A673 (cell line): ENCODE measurements at regions of chr21 and their contacts with region 1.

Region 1: DNA sequence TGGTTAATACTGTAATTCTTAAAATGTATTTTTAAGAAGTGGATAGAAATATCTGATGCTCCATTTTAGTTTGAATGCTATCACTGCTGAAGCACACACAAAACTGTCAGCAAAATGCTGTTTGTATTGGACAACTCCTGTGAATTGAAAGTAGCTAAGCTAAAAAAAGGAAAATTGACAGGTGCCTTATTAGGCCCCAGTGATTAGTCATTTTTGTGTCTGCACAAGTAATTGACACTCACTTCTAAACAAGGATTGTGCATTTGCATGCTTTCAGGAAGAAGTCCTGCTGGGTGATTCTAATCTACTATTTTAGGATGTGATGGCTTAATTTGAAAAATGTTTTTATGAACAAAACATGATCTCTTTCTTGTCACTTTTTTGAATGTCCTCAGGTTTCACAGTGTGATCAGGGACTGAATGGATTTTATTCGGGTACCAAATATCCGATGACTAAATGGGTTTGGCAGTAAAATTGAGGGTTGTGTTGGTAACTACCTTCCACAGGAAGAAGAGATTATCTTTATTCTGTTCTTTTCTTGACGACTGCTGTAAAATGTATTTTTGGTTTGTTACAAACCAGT is 13.0 kb upstream of the MAP3K7CL start:
- DNase-seq: peak; percentile 92
- H3K4me3 ChIP-seq: no peak overlapping the region
- H3K27ac ChIP-seq: no peak overlapping the region
- H3K4me1 ChIP-seq: peaks cover 17% of the 10 kb centered on the region
- H3K27me3 ChIP-seq: no peaks in the 10 kb centered on the region
- CTCF ChIP-seq: no peak

Region 2: DNA sequence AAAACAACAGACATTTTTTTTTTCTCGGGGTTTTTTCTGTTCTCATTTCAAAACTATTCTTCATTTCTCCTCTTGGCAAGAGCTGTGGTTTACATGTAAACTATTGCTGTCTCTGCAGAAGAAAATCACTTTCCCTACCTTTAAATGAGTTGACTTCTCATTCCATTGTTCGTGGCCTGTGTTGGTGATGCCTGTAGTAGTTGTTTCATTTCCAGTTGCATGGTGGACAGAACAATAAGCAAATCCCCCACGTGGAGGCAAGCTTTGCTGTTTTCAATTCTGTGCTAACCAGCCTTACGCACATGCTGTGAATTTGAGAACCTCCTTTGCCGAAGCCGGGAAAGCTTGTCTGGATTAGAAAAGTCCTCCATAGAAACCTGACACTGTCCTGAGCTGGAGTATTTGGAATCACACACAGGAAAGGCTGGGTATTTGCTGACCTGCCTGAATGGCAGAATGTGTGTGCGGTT is 13.2 kb before region 1 on chr21:
- CTCF ChIA-PET with region 1: no interaction called
- POLR2A ChIA-PET with region 1: no interaction called
- intact Hi-C with region 1: no loop called
- DNase-seq: no peak
- H3K4me3 ChIP-seq: no peak overlapping the region
- H3K27ac ChIP-seq: no peak overlapping the region
- H3K4me1 ChIP-seq: peaks cover 4% of the 10 kb centered on the region
- H3K27me3 ChIP-seq: no peaks in the 10 kb centered on the region
- CTCF ChIP-seq: no peak

Region 3: DNA sequence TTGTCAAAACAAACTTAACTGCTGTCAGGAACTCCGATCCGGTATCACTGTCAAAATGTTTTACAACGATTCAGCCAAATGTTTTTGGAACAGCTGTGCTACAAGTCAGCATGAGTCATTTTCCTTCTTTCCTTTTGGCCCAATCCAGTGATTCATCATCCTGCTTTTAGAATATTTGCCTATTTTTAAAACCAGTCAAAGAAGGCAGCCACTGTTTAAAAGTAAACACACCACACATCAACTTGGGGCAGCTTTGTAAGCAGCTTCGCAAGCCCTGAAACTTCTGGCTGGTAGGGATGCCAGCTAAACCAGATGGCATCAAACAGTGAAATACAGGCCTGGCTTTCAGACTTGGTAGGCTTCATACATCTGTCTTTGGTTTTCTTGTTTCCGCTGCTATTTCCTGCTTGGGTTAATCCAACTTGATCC is 27.9 kb after region 1 on chr21:
- CTCF ChIA-PET with region 1: interaction called, 3 read pairs
- POLR2A ChIA-PET with region 1: no interaction called
- intact Hi-C with region 1: loop called (anchors 1 kb)
- DNase-seq: peak; percentile 96
- H3K4me3 ChIP-seq: peak overlapping the region; percentile 7
- H3K27ac ChIP-seq: peak overlapping the region; percentile 82
- H3K4me1 ChIP-seq: peaks cover 42% of the 10 kb centered on the region
- H3K27me3 ChIP-seq: no peaks in the 10 kb centered on the region
- CTCF ChIP-seq: no peak